ENCODE measurements at regions of chr12 and their contacts with region 1.

Region 1: DNA sequence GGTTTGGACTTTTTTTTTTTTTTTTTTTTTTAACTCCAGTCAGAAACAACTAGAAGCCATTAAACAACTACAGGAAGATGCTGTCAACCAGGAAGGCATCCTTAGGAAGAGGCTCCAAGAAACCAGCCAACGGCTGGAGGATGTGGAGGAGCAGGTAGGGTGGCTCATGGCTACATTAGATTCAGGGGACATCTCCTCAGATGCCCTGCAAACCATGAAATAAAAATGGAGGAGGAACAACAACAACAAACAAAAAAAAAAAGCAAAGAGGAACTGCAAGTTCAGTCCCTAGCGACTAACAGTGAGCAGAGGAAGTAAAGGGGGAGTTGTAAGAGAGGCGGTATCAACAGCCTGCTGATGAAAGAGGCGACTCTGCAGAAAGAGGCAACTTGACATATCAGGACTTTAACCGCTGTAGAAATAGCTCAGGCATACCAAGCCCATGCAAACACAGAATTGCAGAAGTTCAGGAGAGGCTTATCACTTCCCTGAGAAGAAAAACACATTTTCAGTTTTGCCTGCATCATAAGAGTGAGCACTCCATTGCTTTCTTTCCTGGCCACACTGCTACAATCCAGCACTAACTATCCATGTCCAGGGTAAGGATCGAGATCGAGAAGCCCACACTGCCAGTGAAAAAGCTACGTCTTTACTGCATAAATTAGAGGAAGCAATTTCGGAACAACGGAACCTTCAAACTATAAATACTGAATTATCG is 103.5 kb upstream of the BCAT1 start:
- DNase-seq: peak; percentile 62
- H3K4me3 Mint-ChIP-seq: peak overlapping the region; percentile 89
- H3K27ac Mint-ChIP-seq: peak overlapping the region; percentile 99
- H3K4me1 Mint-ChIP-seq: peaks cover 32% of the 10 kb centered on the region
- H3K27me3 Mint-ChIP-seq: no peaks in the 10 kb centered on the region

Region 2: DNA sequence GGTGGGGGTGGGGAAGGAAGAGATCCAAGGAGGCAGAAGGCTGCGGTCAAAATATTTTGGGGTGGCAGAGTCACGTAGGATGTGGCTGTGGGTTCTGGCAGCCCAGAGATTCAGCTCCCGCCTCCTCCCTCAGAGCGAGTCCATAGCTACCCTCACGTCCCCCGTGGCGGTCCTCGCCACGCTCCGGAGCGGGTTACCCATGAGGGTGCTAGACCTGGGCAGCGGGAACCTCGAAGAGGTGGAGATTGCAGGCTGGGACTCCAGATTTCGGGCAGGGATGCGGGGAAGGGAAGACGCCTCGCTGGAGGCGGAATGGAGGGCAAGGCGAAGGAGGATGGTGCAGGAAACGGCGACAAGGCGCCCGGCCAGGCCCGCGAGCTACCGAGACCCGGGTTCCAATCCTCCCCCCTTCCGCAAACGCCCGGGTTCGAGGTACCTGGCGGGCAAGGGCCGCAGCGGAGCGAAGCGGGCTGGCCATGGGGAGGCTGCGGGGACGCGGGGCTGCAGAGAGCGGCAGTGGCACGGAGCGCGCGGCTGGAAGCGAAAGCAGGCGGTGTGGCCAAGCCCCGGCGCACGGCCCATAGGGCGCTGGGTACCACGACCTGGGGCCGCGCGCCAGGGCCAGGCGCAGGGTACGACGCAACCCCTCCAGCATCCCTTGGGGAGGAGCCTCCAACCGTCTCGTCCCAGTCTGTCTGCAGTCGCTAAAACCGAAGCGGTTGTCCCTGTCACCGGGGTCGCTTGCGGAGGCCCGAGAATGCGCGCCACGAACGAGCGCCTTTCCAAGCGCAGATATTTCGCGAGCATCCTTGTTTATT is 149.6 kb before region 1 on chr12:
- CTCF ChIA-PET with region 1: no interaction called
- intact Hi-C with region 1: loop called (anchors 1 kb)
- DNase-seq: peak; percentile 23
- H3K4me3 Mint-ChIP-seq: peak overlapping the region; percentile 85
- H3K27ac Mint-ChIP-seq: peak overlapping the region; percentile 71
- H3K4me1 Mint-ChIP-seq: peaks cover 31% of the 10 kb centered on the region
- H3K27me3 Mint-ChIP-seq: peaks cover 28% of the 10 kb centered on the region

Region 3: DNA sequence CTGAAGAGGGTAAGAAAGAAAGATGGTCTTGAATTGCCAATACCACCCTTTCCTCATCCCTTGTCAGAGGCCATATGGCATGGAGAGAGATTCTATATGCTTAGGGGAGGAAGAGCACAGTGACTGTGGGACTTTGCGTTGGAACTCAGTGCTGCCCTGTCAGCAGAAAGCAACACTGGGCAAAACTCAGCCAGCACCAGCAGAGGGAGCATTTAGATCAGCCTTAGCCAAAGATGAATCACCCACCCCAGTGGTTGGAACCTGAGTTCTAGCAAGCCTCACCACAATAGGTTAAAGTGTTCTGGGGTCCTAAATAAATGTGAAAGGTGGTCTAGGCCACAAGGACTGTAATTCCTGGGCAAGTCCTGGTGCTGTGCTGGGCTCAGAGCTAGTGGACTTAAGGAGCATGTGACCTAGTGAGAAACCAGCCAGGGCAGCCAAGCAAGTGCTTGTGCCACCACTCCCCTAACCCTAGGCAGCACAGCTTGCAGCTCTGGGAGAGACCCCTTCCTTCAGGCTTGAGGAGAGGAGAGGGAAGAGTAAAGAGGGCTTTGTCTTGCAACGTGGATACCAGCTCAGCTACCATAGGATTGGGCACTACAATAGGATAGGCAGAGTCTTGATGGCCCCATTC is 92.0 kb before region 1 on chr12:
- CTCF ChIA-PET with region 1: no interaction called
- intact Hi-C with region 1: loop called (anchors 1 kb)
- DNase-seq: peak; percentile 76
- H3K4me3 Mint-ChIP-seq: no peak overlapping the region
- H3K27ac Mint-ChIP-seq: no peak overlapping the region
- H3K4me1 Mint-ChIP-seq: peaks cover 23% of the 10 kb centered on the region
- H3K27me3 Mint-ChIP-seq: peaks cover 17% of the 10 kb centered on the region

Region 4: DNA sequence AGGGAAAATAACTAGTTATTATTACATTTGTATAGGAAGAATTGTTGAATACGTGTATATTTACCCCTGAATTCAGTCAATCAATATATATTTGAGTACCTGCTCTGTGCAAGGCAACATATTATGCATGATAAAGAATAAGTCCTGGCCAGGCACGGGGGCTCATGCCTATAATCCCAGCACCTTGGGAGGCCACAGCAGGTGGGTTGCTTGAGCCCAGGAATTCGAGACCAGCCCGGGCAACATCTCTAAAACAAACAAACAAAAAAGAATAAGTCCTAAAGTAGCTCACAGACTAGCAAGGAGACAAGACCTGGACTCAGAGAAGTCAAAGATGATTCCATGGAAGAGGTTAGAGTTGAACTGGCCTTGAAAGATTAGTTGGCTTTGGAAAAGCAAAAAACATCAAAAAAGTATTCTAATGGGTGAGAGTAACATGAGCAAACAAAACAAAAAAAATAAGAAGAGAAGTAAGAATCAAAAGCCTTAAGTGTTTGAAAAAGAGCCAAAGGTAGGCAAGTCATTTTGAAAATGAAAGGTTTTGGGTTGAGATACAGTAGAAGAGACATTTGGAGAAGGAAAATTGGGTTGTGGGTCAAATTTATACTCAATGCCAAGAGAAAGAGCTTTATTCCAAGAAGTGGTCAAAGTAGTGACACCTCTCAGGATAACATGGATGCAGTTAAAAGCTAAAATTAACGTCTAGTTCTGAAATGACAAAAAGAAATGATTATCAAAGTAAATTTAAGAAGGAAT is 11.7 kb after region 1 on chr12:
- CTCF ChIA-PET with region 1: interaction called, 7 read pairs
- intact Hi-C with region 1: loop called (anchors 1 kb)
- DNase-seq: no peak
- H3K4me3 Mint-ChIP-seq: no peak overlapping the region
- H3K27ac Mint-ChIP-seq: no peak overlapping the region
- H3K4me1 Mint-ChIP-seq: peaks cover 52% of the 10 kb centered on the region
- H3K27me3 Mint-ChIP-seq: no peaks in the 10 kb centered on the region

Region 5: DNA sequence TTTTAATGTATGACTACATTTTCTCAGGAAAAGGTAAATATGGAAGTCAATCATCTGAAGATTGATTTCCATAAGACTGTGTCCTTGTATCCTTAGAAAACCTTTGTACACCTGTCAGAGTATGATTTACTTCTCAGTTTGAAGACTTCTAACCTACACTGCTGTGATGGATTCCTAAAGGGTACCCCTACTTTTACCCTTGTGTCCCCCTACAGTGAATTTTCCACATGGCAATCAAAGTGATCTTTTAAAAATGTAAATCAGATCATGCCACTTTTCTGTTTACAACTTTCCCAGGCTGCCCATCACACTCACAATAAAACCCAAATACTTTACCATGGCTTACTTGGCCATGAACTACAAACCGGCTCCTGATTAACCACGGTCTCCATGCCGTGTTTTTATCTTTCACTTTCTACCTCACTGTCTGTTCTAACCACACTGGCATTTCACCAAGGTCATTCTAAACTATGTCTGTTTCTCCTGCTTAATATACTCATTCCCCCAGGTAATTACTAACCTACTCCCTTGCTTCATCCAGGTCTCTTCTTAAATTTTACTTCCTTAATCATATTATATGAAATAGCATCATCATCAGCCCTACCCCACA is 134.5 kb after region 1 on chr12:
- CTCF ChIA-PET with region 1: no interaction called
- intact Hi-C with region 1: loop called (anchors 2 kb)
- DNase-seq: peak; percentile 37
- H3K4me3 Mint-ChIP-seq: peak overlapping the region; percentile 73
- H3K27ac Mint-ChIP-seq: peak overlapping the region; percentile 77
- H3K4me1 Mint-ChIP-seq: peaks cover 18% of the 10 kb centered on the region
- H3K27me3 Mint-ChIP-seq: no peaks in the 10 kb centered on the region

Region 6: GRCh38 chr12:25320123-25321006 is 268.0 kb after region 1 on chr12:
- CTCF ChIA-PET with region 1: no interaction called
- intact Hi-C with region 1: loop called (anchors 1 kb)
- DNase-seq: peak; percentile 51
- H3K4me3 Mint-ChIP-seq: peak overlapping the region; percentile 33
- H3K27ac Mint-ChIP-seq: peak overlapping the region; percentile 87
- H3K4me1 Mint-ChIP-seq: peaks cover 54% of the 10 kb centered on the region
- H3K27me3 Mint-ChIP-seq: no peaks in the 10 kb centered on the region

Region 7: GRCh38 chr12:25598956-25599355 is 546.6 kb after region 1 on chr12:
- CTCF ChIA-PET with region 1: no interaction called
- intact Hi-C with region 1: loop called (anchors 5 kb)
- DNase-seq: no peak
- H3K4me3 Mint-ChIP-seq: no peak overlapping the region
- H3K27ac Mint-ChIP-seq: no peak overlapping the region
- H3K4me1 Mint-ChIP-seq: peaks cover 27% of the 10 kb centered on the region
- H3K27me3 Mint-ChIP-seq: no peaks in the 10 kb centered on the region

Measured in activated naive CD4-positive, alpha-beta T cell treated with anti-CD3 and anti-CD28 coated beads for 36 hours (primary cell).